Dorsolateral prefrontal cortex (tissue), 120 donors: ENCODE measurements at regions of chr5 and their contacts with region 1.

Region 1: DNA sequence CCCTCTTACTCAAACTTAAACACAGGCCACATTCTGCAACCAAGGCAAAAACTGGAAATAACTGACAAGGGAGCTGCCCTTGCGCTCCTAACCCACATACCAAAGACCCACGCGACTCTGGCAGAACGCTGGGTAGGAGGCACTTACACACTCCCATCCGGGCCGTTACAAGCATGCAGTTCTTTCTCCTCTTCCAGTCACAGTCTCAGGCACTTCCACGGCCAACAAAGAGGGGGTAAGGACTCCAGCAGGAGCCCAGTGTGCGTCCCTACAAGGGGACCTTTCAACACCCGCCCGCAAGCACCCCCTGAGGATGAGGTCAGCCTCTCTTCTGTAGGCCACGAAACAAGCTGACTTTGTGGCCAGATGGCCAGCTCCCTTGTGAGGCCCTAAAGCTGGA is 57.4 kb downstream of the SERINC5 start:
- DNase-seq: peak; percentile 23 to 95 (median 88)
- H3K4me3 ChIP-seq: peak overlapping the region in 27 of 59 donors; percentile 0 to 44 (median 21)
- H3K27ac ChIP-seq: peak overlapping the region; percentile 53 to 97 (median 89)
- H3K27me3 ChIP-seq: no peaks in the 10 kb centered on the region
- CTCF ChIP-seq: peak in 6 of 56 donors; percentile 5 to 42 (median 12)

Region 2: GRCh38 chr5:80117446-80117845 is 81.0 kb before region 1 on chr5:
- intact Hi-C with region 1: no loop called
- DNase-seq: no peak
- H3K4me3 ChIP-seq: no peak overlapping the region
- H3K27ac ChIP-seq: no peak overlapping the region
- H3K27me3 ChIP-seq: no peaks in the 10 kb centered on the region
- CTCF ChIP-seq: no peak

Region 3: DNA sequence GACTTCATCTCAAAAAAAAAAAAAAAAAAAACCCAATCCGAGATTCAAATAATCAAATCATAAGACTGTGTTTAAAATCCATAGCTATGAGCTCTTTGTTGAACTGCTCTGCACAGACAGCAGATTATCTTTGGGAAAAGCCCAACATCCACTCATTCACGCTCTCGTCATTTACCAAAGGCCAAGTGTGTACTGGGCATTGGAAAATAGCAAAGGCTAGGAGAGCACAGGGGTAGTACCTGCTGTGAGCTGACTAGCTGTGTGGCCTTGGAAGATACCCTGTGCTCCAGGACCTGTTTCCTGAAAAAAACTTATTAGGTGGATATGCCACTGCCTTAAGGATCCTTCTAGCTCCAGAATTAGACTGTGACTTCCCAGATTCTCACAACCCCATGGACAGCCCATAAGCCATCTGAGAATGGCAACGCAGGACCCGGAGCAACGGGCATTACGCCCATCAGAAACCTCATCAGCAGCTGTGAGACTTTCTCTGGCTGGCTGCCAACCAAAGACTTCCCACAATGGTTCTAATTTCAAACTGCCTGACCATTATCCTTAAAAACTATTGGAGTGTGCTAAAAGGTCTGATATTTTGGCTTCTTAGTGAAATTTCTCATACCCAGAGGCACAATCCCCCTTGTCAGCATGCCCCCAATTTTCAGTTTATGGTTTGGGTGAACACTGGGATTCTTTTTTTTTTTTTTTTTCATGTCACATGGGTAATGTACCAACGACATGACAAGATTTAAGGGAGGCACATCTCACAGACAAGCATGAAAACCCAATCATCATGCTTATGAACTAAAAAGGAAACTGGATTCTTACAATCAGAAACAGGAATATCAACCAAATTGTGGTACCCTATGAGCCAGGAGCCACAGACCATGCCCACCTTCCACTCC is 40.6 kb after region 1 on chr5:
- intact Hi-C with region 1: loop called in 1 of 2 experiments (anchors 5 kb)
- DNase-seq: peak in 9 of 10 donors; percentile 71 to 91 (median 84)
- H3K4me3 ChIP-seq: peak overlapping the region in 38 of 59 donors; percentile 0 to 53 (median 20)
- H3K27ac ChIP-seq: peak overlapping the region; percentile 2 to 94 (median 83)
- H3K27me3 ChIP-seq: no peaks in the 10 kb centered on the region
- CTCF ChIP-seq: no peak

Region 4: DNA sequence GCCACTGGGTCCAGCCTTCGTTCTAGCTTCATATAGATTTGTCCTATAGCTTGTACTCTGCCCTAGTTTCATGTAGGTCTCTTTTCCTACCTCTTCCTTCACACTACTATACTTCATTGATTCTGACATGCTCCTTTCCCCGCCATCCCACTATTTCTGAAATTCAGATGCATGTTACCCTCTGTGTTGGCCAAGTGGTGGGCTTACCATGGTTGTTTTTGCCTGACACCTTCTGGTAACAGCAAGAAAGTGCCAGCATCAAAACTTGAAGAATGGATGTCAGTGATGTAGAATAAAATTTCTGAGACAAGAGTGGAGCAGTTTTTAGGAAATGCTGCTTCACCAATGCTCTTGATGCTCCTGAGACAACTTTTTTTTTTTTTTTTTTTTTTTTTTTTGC is 76.9 kb after region 1 on chr5:
- intact Hi-C with region 1: no loop called
- DNase-seq: peak in 1 of 10 donors; percentile 42
- H3K4me3 ChIP-seq: no peak overlapping the region
- H3K27ac ChIP-seq: no peak overlapping the region
- H3K27me3 ChIP-seq: no peaks in the 10 kb centered on the region
- CTCF ChIP-seq: peak in 55 of 56 donors; percentile 31 to 80 (median 57)

Region 5: GRCh38 chr5:80407735-80408482 is 209.5 kb after region 1 on chr5 and contains the start of gene ZFYVE16:
- intact Hi-C with region 1: loop called in 1 of 2 experiments (anchors 5 kb)
- DNase-seq: peak; percentile 95 to 98 (median 98)
- H3K4me3 ChIP-seq: peak within 1 kb of the TSS; percentile 63 to 100 (median 92)
- H3K27ac ChIP-seq: peak within 1 kb of the TSS; percentile 88 to 100 (median 99)
- H3K27me3 ChIP-seq: no peaks in the 10 kb centered on the region
- CTCF ChIP-seq: peak in 28 of 56 donors; percentile 4 to 54 (median 31)
- total RNA-seq, gene ZFYVE16: 59.0 to 215 (median 92.5) TPM